ENCODE measurements at regions of chr2 and their contacts with region 1.

Region 1: DNA sequence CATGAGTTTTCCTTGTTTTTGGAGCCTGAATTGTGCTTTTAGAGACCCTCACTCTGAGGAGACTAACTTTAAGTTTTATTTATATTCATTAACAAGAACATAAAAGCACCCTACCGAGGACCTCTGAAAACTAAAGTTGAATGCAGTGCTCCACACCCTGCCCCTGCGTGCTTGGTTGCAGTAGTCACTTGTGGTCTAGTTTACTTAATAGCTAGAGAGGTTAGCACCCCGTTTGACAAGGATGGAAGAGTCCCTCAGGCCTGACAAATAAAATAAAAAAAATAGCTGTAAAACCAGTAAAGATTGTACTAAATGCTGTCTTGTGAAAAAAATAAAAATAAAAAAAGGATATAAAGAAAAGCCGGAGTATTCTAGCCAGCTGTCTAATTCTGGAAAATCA is 395.2 kb downstream of the MTX2 start:
- DNase-seq: no peak
- H3K4me3 Mint-ChIP-seq: no peak overlapping the region
- H3K27ac Mint-ChIP-seq: no peak overlapping the region
- H3K4me1 Mint-ChIP-seq: no peaks in the 10 kb centered on the region
- H3K27me3 Mint-ChIP-seq: peaks cover 25% of the 10 kb centered on the region

Region 2: DNA sequence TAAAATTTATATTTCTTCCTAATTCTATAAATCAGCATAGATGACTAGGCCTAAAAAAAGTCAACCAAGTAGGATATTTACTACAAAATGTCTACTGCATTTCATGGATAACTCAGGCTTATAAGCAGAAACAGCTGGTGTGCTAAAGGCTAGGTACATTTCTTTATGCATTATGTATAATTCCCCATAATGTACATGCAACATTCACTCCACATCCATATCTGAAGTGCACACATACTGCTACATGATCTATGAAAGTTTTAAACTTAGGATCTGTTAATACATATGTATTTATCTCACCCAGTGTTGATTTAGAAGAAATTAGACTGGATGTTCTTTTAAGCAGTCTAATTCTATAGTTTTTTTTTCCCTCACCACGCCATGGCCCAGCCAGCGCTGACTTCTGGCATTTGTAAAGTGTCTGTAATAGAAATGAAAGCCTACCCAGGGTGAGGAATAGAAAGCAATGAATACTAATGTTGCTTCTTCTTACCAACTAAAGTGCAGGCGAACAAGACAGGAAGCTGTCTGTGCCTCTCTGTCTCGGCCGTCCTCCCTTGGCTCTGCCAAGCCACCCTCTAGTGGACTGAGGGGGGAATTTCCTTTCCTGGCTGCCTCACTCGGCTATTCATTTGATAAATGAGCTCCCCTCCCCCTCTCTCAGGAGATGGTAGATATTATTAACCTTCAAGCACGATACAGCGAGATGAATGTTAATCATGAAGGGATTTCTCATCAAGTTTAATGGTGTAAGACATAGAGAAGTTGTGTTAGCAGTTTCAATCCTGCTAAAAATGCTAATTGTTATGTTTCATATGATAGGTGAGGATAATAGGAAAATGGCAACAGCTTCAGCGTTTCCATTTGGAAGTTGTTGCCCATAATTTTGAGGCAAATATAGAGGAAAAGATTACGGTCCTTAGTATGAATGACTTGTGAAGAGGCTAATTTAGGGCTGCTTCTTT is 10.7 kb before region 1 on chr2:
- CTCF ChIA-PET with region 1: interaction called, 11 read pairs
- intact Hi-C with region 1: no loop called
- DNase-seq: peak; percentile 59
- H3K4me3 Mint-ChIP-seq: no peak overlapping the region
- H3K27ac Mint-ChIP-seq: no peak overlapping the region
- H3K4me1 Mint-ChIP-seq: peaks cover 4% of the 10 kb centered on the region
- H3K27me3 Mint-ChIP-seq: peaks cover 32% of the 10 kb centered on the region

Measured in activated naive CD4-positive, alpha-beta T cell treated with anti-CD3 and anti-CD28 coated beads for 36 hours (primary cell).